ENCODE measurements at regions of chr3 and their contacts with region 1.

Region 1: DNA sequence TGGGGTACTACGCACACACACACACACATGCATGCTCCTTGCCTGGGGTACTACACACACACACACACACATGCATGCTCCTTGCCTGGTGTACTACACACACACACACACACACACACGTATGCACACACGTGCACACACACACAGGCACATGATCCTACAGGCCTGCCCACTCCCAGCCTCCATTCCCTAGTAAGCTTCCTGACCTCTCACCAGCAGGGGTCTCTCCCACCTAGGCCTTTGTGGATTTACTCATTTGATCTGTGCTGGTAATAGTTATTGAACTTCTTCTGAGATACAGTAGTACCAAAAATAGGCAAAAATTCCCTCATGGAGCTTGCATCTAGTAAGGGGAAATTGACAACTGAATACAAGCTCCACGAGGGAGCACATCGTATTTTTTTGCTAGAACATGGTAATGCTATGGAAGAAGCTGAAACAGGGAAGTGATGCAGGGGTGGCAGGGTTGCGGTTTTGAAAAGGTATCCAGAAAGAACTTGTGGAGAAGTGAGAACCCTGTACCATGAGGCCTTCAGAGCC is 19.1 kb downstream of the TTC21A start:
- DNase-seq: no peak
- H3K4me3 ChIP-seq: no peak overlapping the region
- CTCF ChIP-seq: peak; percentile 80

Region 2: DNA sequence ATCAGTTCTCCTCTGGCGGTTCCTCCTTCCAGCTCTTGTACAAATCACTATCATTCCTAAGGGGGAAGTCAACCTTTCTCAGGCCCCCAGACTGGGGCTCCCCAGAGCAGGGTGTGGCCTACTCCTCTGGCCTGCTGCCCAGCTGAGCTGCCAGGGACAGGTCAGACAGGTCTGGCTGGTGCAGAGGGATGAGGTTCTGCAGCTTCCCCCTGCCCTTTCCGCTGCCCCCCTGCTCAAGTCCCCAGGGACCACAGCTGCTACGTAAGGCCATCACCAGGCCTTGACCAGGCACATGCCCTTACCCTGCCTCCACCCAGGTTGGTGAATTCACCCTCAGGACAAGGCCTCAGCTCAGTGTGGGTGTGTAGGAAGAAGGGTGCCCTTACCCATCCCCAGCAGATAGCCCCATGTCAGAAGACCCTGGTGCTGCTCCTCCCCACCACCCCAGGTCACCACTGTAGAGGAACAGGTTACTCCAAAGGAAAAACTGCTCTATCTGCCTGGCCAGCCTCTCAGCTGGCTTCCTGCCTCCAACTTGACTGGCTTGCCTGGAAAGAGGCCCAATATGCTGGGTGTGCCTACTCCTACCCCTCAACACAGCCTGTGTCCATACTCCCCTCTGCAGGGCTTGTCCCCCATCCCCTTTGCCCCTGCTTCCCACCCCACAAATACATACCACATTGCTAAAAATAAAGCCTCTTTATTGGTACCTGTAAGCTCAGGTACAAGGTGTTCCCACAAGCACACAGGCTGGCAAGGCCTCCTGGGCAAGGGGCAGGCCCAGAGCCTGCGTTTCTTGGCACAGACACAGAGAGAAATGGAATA is 14.8 kb after region 1 on chr3:
- CTCF ChIA-PET with region 1: interaction called, 26 read pairs
- POLR2A ChIA-PET with region 1: interaction called, 7 read pairs
- DNase-seq: no peak
- H3K4me3 ChIP-seq: no peak overlapping the region
- CTCF ChIP-seq: no peak

Region 3: GRCh38 chr3:39166134-39166731 is 39.6 kb after region 1 on chr3:
- CTCF ChIA-PET with region 1: interaction called, 28 read pairs
- POLR2A ChIA-PET with region 1: no interaction called
- DNase-seq: peak; percentile 89
- H3K4me3 ChIP-seq: no peak overlapping the region
- CTCF ChIP-seq: peak; percentile 0

Region 4: DNA sequence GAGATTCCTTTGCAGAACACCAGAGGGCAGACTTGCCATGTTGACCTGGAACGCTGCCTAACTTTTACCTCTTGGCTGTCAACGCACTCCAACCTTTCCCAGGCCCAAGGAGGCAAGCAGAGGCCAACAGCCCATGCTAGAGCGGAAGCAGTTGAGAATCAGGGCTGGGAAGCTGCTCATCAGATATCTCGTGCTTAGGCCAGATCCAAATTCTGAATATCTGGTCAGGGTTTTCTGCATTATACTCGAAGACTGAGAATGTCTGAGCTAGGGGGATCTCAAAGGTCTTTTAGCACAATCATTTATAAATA is 63.3 kb after region 1 on chr3:
- CTCF ChIA-PET with region 1: interaction called, 115 read pairs
- POLR2A ChIA-PET with region 1: no interaction called
- DNase-seq: no peak
- H3K4me3 ChIP-seq: no peak overlapping the region
- CTCF ChIP-seq: peak; percentile 82

Region 5: GRCh38 chr3:39249453-39250115 is 123.0 kb after region 1 on chr3:
- CTCF ChIA-PET with region 1: interaction called, 15 read pairs
- POLR2A ChIA-PET with region 1: no interaction called
- DNase-seq: no peak
- H3K4me3 ChIP-seq: no peak overlapping the region
- CTCF ChIP-seq: no peak

Region 6: DNA sequence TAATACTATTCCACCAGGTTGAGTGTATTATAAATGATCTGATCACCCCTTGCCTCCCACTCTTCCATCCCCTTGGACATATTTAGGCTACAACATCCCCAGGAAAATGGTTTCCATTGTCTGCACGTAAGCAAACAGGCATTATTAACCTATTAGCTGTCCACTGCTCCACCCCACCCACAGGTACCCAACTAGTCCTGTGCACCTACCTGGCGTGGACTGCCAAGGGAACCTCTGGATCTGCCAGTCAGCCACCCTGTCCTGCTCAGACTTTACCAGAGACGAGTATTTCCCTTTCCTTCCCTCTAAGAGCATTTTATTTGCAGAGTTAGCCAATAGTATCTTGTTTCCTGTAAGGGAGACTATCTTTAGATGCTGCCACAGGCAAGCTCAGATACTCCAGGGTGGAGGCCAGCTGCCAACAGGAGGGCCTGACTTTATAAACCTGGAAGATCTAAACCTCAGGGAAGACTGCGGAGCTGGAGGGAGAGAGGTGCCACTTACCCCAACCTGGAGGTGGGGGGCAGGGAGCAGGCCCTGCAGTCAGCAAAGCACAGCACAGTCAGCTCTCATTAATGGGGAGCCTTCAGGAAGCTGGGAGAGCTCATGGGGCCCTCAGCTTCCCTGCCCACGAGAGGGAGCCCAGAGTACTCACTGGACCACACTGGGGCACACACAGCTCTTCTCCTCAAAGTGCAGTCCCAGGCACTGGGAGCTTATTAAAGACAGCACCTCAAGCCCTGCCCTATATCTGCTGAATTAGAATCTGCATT is 153.3 kb after region 1 on chr3 and contains the start of gene CX3CR1:
- CTCF ChIA-PET with region 1: interaction called, 545 read pairs
- POLR2A ChIA-PET with region 1: no interaction called
- DNase-seq: no peak
- H3K4me3 ChIP-seq: no peak within 1 kb of the TSS
- CTCF ChIP-seq: no peak

Measured in AG04449 (cell line).